ENCODE measurements at regions of chr15 and their contacts with region 1.

Region 1: DNA sequence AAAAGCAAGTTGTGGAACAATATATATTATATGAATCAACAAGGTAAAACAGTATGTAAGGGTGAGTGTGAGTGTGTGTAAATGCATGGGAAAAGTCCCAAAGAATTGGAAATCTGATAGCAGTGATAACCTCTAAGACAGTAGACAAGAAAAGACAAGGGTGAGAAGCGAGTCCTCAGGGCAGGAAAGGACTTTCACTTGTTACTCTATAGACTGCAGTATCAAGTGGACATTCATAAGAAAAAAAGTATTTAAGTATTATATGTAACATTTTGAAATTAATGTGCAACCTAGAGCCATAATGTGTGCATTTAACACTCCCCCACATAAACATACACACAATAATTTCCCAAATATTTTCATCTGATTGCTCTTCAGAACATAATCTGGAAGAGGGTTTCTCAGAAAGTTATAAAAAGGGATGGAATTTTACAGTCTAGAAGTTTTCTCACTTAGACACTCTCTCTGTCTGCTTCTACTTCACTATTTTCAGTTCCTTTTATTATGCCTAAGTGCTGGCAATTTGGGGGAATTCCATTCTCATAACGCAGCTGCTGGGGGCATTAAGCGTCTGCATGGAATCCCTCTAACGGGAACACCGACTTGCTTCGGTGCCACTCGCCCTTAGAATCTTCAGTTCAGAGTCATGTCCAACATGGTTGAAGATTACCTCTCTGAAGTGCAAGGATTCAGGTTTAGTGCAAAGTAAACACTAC is 50.0 kb upstream of the CDIN1 start:
- DNase-seq: no peak
- ATAC-seq: no peak
- H3K4me3 Mint-ChIP-seq: no peak overlapping the region
- H3K27ac Mint-ChIP-seq: no peak overlapping the region
- H3K4me1 Mint-ChIP-seq: no peaks in the 10 kb centered on the region
- H3K27me3 Mint-ChIP-seq: peaks cover 15% of the 10 kb centered on the region

Region 2: GRCh38 chr15:36479200-36479896 is 50.1 kb before region 1 on chr15:
- CTCF ChIA-PET with region 1: no interaction called
- POLR2A ChIA-PET with region 1: no interaction called
- intact Hi-C with region 1: no loop called
- DNase-seq: no peak
- ATAC-seq: no peak
- H3K4me3 Mint-ChIP-seq: no peak overlapping the region
- H3K27ac Mint-ChIP-seq: no peak overlapping the region
- H3K4me1 Mint-ChIP-seq: no peaks in the 10 kb centered on the region
- H3K27me3 Mint-ChIP-seq: no peaks in the 10 kb centered on the region

Region 3: GRCh38 chr15:36544518-36545466 is 15.3 kb after region 1 on chr15:
- CTCF ChIA-PET with region 1: no interaction called
- POLR2A ChIA-PET with region 1: no interaction called
- intact Hi-C with region 1: no loop called
- DNase-seq: no peak
- ATAC-seq: no peak
- H3K4me3 Mint-ChIP-seq: no peak overlapping the region
- H3K27ac Mint-ChIP-seq: no peak overlapping the region
- H3K4me1 Mint-ChIP-seq: no peaks in the 10 kb centered on the region
- H3K27me3 Mint-ChIP-seq: peaks cover 14% of the 10 kb centered on the region

Region 4: DNA sequence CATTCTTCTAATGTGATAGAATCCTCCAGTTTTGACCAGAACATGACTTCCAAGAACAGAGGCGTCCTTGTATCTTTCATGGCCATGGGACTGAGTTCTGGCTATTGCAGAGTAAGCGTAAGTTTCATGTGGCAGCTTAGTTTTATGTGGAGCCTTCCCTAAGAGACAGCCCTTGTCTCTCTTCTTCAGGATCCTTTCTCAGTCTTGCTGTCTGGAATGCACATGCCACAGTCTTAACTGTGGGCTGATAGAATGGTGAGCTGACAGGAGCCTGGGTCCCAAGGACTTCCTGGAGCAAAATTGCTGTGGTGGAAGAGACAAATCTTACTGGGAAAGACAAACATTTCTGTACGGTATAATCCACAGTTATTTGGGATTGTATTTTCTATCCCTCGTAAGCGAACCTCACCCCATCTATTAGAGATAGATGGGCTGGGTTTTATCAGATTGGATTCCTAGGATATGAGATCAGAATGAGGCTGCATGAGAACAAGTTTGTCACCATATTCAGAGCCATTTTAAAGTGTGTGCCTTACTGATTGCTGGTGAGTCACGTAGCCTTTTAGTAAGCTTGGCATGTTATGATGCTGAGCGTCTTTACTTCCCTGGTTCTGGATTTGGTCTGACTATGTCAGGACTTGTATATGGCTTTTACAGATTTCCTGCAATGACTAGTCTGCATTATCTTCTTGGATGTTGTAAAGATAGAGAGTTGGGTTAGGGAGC is 82.8 kb after region 1 on chr15:
- CTCF ChIA-PET with region 1: no interaction called
- POLR2A ChIA-PET with region 1: no interaction called
- intact Hi-C with region 1: loop called in 1 of 2 experiments (anchors 10 kb)
- DNase-seq: no peak
- ATAC-seq: no peak
- H3K4me3 Mint-ChIP-seq: no peak overlapping the region
- H3K27ac Mint-ChIP-seq: no peak overlapping the region
- H3K4me1 Mint-ChIP-seq: no peaks in the 10 kb centered on the region
- H3K27me3 Mint-ChIP-seq: no peaks in the 10 kb centered on the region